ENCODE measurements at regions of chr5 and their contacts with region 1.

Region 1: GRCh38 chr5:172479044-172479783 is 24.9 kb upstream of the SH3PXD2B start:
- DNase-seq: peak; percentile 92
- ATAC-seq: peak; percentile 94 to 99
- H3K4me3 ChIP-seq: no peak overlapping the region
- H3K27ac ChIP-seq: no peak overlapping the region; a peak in 1 of 6 replicates
- H3K4me1 ChIP-seq: no peaks in the 10 kb centered on the region
- CTCF ChIP-seq: peak; percentile 96
- EP300 ChIP-seq: no peak
- POLR2A ChIP-seq: no peak
- RAD21 ChIP-seq: peak; percentile 96 to 97

Region 2: GRCh38 chr5:172496671-172497371 is 17.6 kb after region 1 on chr5:
- CTCF ChIA-PET with region 1: interaction called, 24 read pairs
- POLR2A ChIA-PET with region 1: no interaction called
- DNase-seq: no peak
- ATAC-seq: peak in 1 of 2 experiments; percentile 22; a peak in 1 of 6 replicates
- H3K4me3 ChIP-seq: no peak overlapping the region
- H3K27ac ChIP-seq: no peak overlapping the region
- H3K4me1 ChIP-seq: no peaks in the 10 kb centered on the region
- CTCF ChIP-seq: no peak
- EP300 ChIP-seq: no peak
- POLR2A ChIP-seq: no peak
- RAD21 ChIP-seq: no peak

Region 3: DNA sequence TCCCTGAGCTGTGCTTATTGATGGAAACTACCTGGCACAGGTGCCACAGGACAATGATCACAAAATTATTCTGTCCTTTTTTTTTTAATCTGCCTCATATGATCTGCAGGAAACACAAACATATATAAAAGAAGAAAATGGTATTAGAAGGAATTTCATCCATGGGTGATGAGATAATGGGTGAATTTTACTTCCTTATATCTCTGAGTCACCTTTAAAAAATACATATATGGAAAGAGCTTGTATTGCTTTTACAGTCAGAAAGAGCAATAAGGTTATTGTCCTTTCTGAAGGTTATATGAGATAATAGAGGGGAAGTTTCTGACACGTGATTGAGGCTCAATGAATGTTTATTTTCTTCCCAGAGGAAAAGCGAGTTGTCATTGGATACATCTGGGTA is 193.5 kb after region 1 on chr5:
- CTCF ChIA-PET with region 1: interaction called, 10 read pairs
- POLR2A ChIA-PET with region 1: no interaction called
- DNase-seq: no peak
- ATAC-seq: no peak
- H3K4me3 ChIP-seq: no peak overlapping the region
- H3K27ac ChIP-seq: no peak overlapping the region
- H3K4me1 ChIP-seq: no peaks in the 10 kb centered on the region
- CTCF ChIP-seq: no peak
- EP300 ChIP-seq: no peak
- POLR2A ChIP-seq: no peak
- RAD21 ChIP-seq: no peak

Region 4: DNA sequence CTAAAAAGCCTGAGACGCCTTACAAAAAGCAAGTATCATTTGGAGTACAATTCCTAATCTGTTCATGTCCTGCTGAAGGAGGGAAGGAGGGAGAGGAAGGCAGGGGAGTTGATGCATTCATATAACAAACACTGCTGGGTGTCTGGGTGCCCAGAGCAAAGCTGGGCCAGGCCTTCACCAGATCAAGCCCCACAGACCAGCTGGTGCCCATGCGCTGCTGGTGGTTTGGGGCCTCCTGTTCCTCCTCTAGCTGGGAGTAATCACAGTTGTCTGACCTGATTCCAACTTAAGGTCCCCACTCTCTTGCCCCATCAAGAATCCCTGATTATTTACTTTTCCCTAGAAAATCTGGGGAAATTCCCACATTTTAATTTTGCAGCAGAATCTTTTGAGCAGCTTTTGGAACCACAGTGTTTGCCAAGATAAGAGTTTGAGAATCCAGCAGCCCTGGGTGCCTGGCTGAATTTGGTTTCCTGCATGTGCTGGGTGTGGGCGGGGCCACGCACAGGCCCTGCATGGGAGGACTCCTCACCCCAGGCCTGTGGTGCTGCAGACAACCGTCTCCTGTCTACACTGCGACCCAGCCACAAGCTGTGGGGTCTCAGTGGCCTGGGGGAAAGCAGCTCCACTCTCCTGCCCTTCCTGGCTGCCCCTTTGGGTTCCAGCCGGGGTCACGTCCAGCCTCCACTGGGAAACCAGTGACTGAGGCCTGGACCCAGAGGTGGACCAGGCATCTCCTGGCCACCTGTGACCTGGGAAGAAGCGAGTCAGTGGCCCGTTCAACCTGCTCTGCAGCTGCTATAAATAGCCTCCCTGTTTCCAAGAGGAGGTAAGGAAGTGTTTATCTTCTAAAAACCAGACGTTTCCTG is 209.4 kb after region 1 on chr5:
- CTCF ChIA-PET with region 1: interaction called, 198 read pairs
- POLR2A ChIA-PET with region 1: no interaction called
- DNase-seq: no peak
- ATAC-seq: peak in 1 of 2 experiments; percentile 37; a peak in 1 of 6 replicates
- H3K4me3 ChIP-seq: no peak overlapping the region
- H3K27ac ChIP-seq: no peak overlapping the region
- H3K4me1 ChIP-seq: no peaks in the 10 kb centered on the region
- CTCF ChIP-seq: no peak
- EP300 ChIP-seq: no peak
- POLR2A ChIP-seq: no peak
- RAD21 ChIP-seq: no peak